Activated CD4-positive, alpha-beta T cell treated with anti-CD3 and anti-CD28 coated beads for 36 hours (primary cell): ENCODE measurements at regions of chr7 and their contacts with region 1.

Region 1: DNA sequence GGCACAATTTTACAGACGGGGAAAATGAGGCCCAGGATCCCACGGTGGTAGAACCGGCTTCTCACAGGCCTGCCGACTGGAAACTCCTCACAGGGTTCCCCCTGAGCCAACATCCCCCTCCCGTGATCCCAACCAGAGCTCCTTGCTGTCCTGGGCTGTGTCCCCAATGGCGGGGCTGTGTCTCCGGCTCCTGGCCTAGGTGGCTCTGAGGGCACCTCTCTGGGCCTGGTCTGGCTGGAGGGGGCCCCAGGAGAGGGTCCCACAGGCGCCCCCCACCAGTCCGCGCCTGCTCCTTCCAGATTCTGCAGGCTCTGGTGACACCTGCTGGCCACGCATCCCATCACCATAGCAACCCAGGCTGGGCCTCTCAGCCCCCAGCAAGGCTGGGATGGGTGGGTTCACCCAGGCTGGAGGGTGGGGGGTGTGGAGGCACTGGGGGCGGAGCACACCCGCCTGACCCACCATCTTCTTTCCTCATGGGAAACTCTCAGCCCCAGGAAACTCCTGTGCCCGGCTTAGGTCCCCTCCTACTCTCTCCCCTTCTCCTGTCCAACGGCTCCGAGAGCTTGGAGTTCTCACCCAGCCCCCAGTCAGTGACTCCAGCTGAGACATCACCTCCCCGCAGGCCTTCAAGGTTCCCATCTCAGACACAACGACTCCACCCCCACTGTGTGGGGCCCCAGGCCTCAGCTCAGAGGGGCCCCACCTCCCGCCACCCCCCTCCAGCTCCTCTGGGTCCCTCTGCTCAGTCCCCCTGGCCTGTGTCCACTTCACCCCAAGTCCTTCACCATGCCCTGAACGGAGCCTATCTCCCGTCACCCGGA is 27.1 kb upstream of the TNRC18 start:
- DNase-seq: peak; percentile 61
- ATAC-seq: peak; percentile 74
- H3K4me3 Mint-ChIP-seq: no peak overlapping the region
- H3K27ac Mint-ChIP-seq: no peak overlapping the region
- H3K4me1 Mint-ChIP-seq: no peaks in the 10 kb centered on the region
- H3K27me3 Mint-ChIP-seq: peaks cover 5% of the 10 kb centered on the region

Region 2: GRCh38 chr7:5237286-5237685 is 213.5 kb before region 1 on chr7:
- CTCF ChIA-PET with region 1: interaction called, 6 read pairs
- POLR2A ChIA-PET with region 1: no interaction called
- intact Hi-C with region 1: loop called (anchors 1 kb)
- DNase-seq: no peak
- ATAC-seq: no peak
- H3K4me3 Mint-ChIP-seq: no peak overlapping the region
- H3K27ac Mint-ChIP-seq: no peak overlapping the region
- H3K4me1 Mint-ChIP-seq: peaks cover 17% of the 10 kb centered on the region
- H3K27me3 Mint-ChIP-seq: peaks cover 12% of the 10 kb centered on the region

Region 3: GRCh38 chr7:5363729-5364128 is 87.0 kb before region 1 on chr7:
- CTCF ChIA-PET with region 1: interaction called, 3 read pairs
- POLR2A ChIA-PET with region 1: no interaction called
- intact Hi-C with region 1: loop called (anchors 1 to 2 kb)
- DNase-seq: peak; percentile 56
- ATAC-seq: peak; percentile 66
- H3K4me3 Mint-ChIP-seq: no peak overlapping the region
- H3K27ac Mint-ChIP-seq: no peak overlapping the region
- H3K4me1 Mint-ChIP-seq: peaks cover 13% of the 10 kb centered on the region
- H3K27me3 Mint-ChIP-seq: no peaks in the 10 kb centered on the region